ENCODE measurements at regions of chr20 and their contacts with region 1.

Region 1: GRCh38 chr20:37392421-37393178 is 46.7 kb downstream of the SRC start:
- DNase-seq: no peak
- H3K4me3 ChIP-seq: no peak overlapping the region
- H3K27ac ChIP-seq: no peak overlapping the region
- H3K4me1 ChIP-seq: peaks cover 0 to 32% (median 23%) of the 10 kb centered on the region in 4 experiments; a peak in 6 of 7 replicates
- H3K27me3 ChIP-seq: no peaks in the 10 kb centered on the region
- CTCF ChIP-seq: peak; percentile 61 to 81 (median 71)
- EP300 ChIP-seq: no peak
- POLR2A ChIP-seq: no peak
- RAD21 ChIP-seq: peak; percentile 59 to 78

Region 2: DNA sequence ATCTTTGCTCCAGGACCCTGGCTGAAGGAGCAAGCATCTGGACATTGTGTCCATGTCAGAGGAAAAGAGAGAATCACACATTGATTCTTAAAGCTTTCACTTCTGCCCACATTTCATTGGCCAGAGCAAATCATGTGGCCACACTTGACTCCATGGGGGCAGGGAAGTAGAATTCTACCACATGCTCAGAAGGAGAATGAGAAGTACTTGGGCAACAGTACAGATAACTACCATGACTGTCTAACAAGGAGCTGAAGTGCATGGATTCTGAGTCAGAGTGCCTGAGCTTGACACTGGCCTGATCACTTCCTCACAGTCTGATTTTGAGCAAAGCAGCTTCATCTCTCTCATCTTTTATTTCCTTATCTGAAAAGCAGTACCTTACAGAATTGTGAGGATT is 169.5 kb before region 1 on chr20:
- CTCF ChIA-PET with region 1: no interaction called
- POLR2A ChIA-PET with region 1: no interaction called
- DNase-seq: no peak
- H3K4me3 ChIP-seq: no peak overlapping the region
- H3K27ac ChIP-seq: no peak overlapping the region
- H3K4me1 ChIP-seq: peaks cover 0 to 9% (median 0%) of the 10 kb centered on the region in 4 experiments; a peak in 3 of 7 replicates
- H3K27me3 ChIP-seq: no peaks in the 10 kb centered on the region; a peak in 1 of 7 replicates
- CTCF ChIP-seq: no peak
- EP300 ChIP-seq: no peak
- POLR2A ChIP-seq: no peak
- RAD21 ChIP-seq: no peak

Region 3: DNA sequence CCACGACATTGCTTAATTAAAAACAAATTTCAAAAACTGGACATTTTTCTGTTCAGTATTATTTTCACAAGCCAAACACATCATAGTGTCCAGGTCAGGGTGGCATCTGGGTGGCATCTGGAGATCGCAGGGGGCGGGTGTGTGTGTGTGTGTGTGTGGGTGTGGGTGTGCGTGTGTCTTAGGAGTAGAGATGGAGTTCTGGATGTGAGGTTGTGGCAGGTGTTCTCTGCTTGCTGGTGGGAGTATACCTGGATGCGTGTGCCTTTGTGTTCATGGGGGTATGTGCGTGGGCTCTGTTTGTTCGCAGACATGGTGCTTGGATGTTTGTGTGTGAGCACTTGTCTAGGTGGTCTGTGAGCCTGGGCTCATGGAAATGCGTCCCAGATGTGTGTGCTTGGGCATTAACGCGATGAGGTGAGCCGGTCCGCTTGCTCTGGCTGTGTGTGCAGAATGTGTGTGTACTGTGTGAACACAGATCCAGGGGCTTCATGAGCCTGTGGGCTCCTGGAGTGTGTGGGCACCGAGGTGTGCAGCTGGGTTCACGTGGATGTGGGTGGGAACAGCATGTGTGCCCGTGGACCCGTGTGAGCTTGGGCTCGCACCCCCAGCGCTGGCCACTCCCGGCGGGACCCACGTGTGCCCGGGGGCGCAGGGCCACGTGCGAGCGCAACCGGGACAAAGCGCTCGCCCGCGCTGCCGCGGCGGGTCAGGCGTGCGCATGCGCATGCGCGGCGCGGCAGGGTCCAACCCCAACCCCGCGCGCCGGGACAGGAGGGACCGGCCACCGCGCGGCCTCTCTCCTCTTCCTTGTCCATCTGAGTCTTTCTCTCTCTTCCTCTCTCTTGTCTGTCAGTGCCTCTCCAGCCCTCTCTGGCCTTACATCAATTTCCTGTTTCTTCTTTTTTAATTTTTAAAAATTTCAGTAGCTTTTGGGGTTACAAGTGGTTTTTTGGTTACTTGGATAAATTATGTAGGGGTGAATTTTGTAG is 13.7 kb after region 1 on chr20:
- CTCF ChIA-PET with region 1: interaction called, 8 read pairs
- POLR2A ChIA-PET with region 1: interaction called, 24 read pairs
- DNase-seq: no peak
- H3K4me3 ChIP-seq: peak overlapping the region; percentile 6 to 48 (median 19); a peak in 6 of 8 replicates
- H3K27ac ChIP-seq: 0 out of 2 replicates have a peak overlapping the region, but pooled peaks have one; percentile 8
- H3K4me1 ChIP-seq: peaks cover 4 to 25% (median 10%) of the 10 kb centered on the region in 4 experiments
- H3K27me3 ChIP-seq: peaks cover 0 to 9% (median 1%) of the 10 kb centered on the region in 4 experiments; a peak in 3 of 7 replicates
- CTCF ChIP-seq: no peak
- EP300 ChIP-seq: no peak
- POLR2A ChIP-seq: peak in 1 of 2 experiments; percentile 62; a peak in 1 of 3 replicates
- RAD21 ChIP-seq: no peak

Region 4: GRCh38 chr20:37490663-37491350 is 98.2 kb after region 1 on chr20:
- CTCF ChIA-PET with region 1: interaction called, 15 read pairs
- POLR2A ChIA-PET with region 1: interaction called, 3 read pairs
- DNase-seq: no peak
- H3K4me3 ChIP-seq: no peak overlapping the region
- H3K27ac ChIP-seq: no peak overlapping the region
- H3K4me1 ChIP-seq: peaks cover 0 to 4% (median 0%) of the 10 kb centered on the region in 4 experiments; a peak in 2 of 7 replicates
- H3K27me3 ChIP-seq: no peaks in the 10 kb centered on the region; a peak in 2 of 7 replicates
- CTCF ChIP-seq: no peak
- EP300 ChIP-seq: no peak
- POLR2A ChIP-seq: no peak
- RAD21 ChIP-seq: no peak

Region 5: GRCh38 chr20:37519508-37520128 is 127.0 kb after region 1 on chr20:
- CTCF ChIA-PET with region 1: interaction called, 12 read pairs
- POLR2A ChIA-PET with region 1: interaction called, 20 read pairs
- DNase-seq: peak in 1 of 2 experiments; percentile 67
- H3K4me3 ChIP-seq: peak overlapping the region; percentile 45 to 66 (median 48); a peak in 7 of 8 replicates
- H3K27ac ChIP-seq: no peak overlapping the region
- H3K4me1 ChIP-seq: peaks cover 9 to 39% (median 30%) of the 10 kb centered on the region in 4 experiments
- H3K27me3 ChIP-seq: no peaks in the 10 kb centered on the region; a peak in 1 of 7 replicates
- CTCF ChIP-seq: no peak
- EP300 ChIP-seq: no peak
- POLR2A ChIP-seq: no peak
- RAD21 ChIP-seq: peak in 1 of 2 experiments; percentile 8; a peak in 1 of 4 replicates

Region 6: DNA sequence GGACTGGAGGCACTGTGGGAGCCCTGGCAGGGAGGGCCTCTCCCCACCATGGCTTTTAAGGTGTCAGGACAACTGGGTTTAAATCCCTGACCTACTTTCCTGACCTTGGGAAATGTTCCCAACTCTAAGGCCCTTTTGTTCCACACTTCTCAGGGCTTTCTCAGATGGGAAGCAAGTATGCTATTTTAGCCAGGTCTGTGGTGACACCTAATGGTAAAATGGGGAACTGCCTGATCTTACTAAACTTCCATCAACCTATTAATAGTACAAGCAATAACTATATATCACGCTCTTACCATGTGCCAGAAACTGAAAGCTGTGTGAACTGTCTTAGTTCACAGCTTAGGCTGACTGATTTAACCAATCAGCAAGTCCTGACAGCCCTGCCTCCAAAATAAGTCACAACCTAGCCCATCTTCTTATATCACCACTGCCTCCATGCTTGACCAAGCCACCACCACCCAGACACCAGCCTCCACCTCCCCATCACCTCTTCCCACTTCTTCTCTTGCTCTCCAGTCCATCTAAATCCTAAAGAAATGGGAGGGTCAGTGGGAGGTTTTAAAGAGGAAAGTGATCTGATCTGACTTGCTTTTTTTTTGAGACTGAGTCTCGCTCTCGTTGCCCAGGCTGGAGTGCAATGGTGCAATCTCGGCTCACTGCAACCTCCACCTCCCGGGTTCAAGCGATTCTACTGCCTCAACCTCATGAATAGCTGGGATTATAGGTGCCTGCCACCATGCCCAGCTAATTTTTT is 142.0 kb after region 1 on chr20:
- CTCF ChIA-PET with region 1: interaction called, 39 read pairs
- POLR2A ChIA-PET with region 1: interaction called, 11 read pairs
- DNase-seq: peak in 1 of 2 experiments; percentile 70
- H3K4me3 ChIP-seq: no peak overlapping the region
- H3K27ac ChIP-seq: no peak overlapping the region
- H3K4me1 ChIP-seq: no peaks in the 10 kb centered on the region
- H3K27me3 ChIP-seq: no peaks in the 10 kb centered on the region
- CTCF ChIP-seq: peak in 2 of 3 experiments; percentile 78 to 90; a peak in 3 of 4 replicates
- EP300 ChIP-seq: no peak
- POLR2A ChIP-seq: no peak
- RAD21 ChIP-seq: peak; percentile 97 to 98

Measured in H1 (cell line).